ENCODE measurements at regions of chr9 and their contacts with region 1.

Region 1: GRCh38 chr9:127785023-127785932 is 556 bp upstream of the CDK9 start:
- DNase-seq: peak; percentile 76
- H3K4me3 Mint-ChIP-seq: peak overlapping the region; percentile 90
- H3K27ac Mint-ChIP-seq: peak overlapping the region; percentile 63
- H3K4me1 Mint-ChIP-seq: peaks cover 9% of the 10 kb centered on the region
- H3K27me3 Mint-ChIP-seq: no peaks in the 10 kb centered on the region
- CTCF ChIP-seq: peak; percentile 92

Region 2: DNA sequence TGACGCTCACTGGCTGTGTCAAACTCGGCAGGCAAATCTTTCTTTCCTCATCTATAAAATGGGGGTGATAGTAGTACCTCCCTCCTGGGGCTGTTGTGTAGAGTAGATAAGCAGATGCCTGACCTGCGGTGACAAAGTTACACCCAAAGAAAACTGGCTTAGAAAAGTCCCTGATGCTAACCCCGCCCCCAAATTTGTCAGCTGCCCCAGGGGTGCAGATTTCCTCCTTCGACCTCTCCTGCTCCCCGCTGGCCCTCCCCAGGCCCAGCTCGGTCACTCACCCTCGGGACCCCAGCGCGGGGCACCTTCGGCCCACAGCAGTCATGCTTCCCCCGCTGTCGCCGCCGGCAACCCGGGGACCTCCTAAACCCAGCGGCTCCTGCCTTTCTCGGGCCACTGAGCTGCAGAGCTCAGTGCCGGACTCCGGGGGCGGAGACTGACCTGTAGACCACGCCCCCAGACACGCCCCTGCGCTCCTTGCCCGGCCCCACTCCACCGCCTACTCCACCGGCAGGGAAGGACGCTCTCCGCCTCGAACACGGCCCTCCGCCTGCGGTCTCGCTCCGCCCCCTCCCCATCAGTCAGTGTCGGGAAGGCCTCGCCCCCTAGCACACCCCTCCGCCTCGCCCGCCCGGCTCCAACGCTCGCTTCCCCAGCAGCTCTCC is 14.2 kb before region 1 on chr9:
- CTCF ChIA-PET with region 1: interaction called, 6 read pairs
- POLR2A ChIA-PET with region 1: interaction called, 28 read pairs
- intact Hi-C with region 1: no loop called
- DNase-seq: peak; percentile 96
- H3K4me3 Mint-ChIP-seq: peak overlapping the region; percentile 83
- H3K27ac Mint-ChIP-seq: peak overlapping the region; percentile 43
- H3K4me1 Mint-ChIP-seq: no peaks in the 10 kb centered on the region
- H3K27me3 Mint-ChIP-seq: no peaks in the 10 kb centered on the region
- CTCF ChIP-seq: no peak

Region 3: DNA sequence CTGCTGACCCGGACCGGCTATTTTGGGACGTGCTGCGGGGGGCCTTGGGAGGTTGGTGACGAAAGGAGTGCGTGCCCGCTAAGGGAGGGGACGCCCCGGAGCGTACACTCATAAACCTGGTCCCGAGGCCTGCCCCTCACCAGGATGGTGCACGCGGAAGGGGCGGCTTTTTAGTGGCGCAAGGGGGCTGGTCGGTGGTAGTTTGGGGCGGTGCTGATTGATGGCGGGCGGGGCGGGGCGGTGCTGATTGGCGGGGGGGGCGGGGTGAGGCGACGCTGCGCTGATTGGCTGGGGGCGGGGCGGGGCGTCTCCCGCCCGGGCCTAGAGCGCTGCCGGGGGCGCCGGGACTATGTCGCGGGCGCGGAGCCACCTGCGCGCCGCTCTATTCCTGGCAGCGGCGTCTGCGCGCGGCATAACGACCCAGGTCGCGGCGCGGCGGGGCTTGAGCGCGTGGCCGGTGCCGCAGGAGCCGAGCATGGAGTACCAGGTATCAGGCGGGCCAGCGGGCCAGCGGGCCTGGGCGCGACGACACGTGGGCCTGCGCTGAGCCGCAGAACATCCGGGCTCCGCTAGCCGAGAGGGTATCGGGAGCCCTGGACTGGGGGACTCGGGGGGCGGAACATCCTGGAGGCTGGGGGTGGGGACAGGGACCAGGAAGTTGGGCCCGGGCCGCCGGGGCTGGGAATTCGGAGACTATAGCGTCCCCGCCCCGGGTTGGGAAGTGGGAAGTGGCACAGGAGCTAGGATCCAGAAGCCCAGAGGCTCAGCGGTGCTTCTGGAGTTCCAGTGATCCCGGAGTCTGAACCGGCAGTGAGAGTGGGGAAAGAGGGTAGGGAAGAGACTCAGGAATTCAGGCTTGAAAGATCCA is 17.5 kb after region 1 on chr9 and contains the start of gene FPGS:
- CTCF ChIA-PET with region 1: interaction called, 3 read pairs
- POLR2A ChIA-PET with region 1: interaction called, 21 read pairs
- intact Hi-C with region 1: no loop called
- DNase-seq: peak; percentile 80
- H3K4me3 Mint-ChIP-seq: peak within 1 kb of the TSS; percentile 87
- H3K27ac Mint-ChIP-seq: peak within 1 kb of the TSS; percentile 96
- H3K4me1 Mint-ChIP-seq: peaks cover 18% of the 10 kb centered on the region
- H3K27me3 Mint-ChIP-seq: no peaks in the 10 kb centered on the region
- CTCF ChIP-seq: no peak
- total RNA-seq, gene FPGS: 130 and 131 TPM in 2 replicates

Region 4: DNA sequence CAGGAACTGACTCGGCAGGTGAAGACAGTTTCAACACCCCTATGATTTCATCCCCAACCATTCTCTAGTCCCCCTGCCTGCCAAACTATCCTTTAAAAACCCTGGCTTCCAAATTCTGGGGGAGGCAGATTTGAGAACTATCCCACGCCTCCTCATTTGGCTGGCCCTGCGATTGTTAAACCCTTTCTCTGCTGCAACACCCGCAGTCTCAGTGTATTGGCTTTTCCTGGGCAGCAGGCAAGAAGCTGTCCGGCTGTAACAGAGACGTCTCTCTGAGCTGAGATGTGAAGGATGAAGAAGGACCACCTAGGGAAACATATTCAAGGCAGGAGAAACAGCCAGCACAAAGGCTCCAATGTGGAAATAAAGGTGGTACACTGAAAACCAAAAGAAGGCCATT is 107.6 kb after region 1 on chr9:
- CTCF ChIA-PET with region 1: no interaction called
- POLR2A ChIA-PET with region 1: no interaction called
- intact Hi-C with region 1: no loop called
- DNase-seq: no peak
- H3K4me3 Mint-ChIP-seq: no peak overlapping the region
- H3K27ac Mint-ChIP-seq: no peak overlapping the region
- H3K4me1 Mint-ChIP-seq: peaks cover 6% of the 10 kb centered on the region
- H3K27me3 Mint-ChIP-seq: no peaks in the 10 kb centered on the region
- CTCF ChIP-seq: no peak

Measured in MCF 10A (cell line).